Activated CD8-positive, alpha-beta T cell treated with anti-CD3 and anti-CD28 coated beads for 36 hours (primary cell): ENCODE measurements at regions of chr3 and their contacts with region 1.

Region 1: DNA sequence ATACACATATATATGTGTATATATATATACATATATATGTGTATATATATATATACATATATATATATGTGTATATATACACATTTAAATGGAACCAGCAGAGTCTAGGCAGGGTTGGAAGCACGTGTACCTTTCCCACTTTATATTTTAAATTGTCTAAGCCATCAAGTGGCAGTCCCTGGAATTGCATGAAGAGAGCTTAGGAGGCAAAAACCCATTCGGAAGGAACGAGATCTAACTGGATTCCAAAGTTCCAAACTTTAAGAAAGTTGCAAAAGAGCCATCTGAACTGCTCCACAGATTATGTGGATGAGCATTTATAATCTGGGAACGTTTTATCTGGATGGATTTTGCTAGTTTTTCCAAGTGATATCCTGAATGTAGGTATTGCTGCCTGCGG is 186.5 kb downstream of the FOXP1 start:
- DNase-seq: peak; percentile 49
- ATAC-seq: no peak
- H3K4me3 Mint-ChIP-seq: peak overlapping the region; percentile 73
- H3K27ac Mint-ChIP-seq: peak overlapping the region; percentile 91
- H3K4me1 Mint-ChIP-seq: peaks cover 80% of the 10 kb centered on the region
- H3K27me3 Mint-ChIP-seq: no peaks in the 10 kb centered on the region
- CTCF ChIP-seq: peak; percentile 43

Region 2: GRCh38 chr3:71087143-71088018 is 309.7 kb before region 1 on chr3:
- CTCF ChIA-PET with region 1: no interaction called
- POLR2A ChIA-PET with region 1: no interaction called
- intact Hi-C with region 1: loop called (anchors 10 kb)
- DNase-seq: peak; percentile 71
- ATAC-seq: peak; percentile 72
- H3K4me3 Mint-ChIP-seq: peak overlapping the region; percentile 57
- H3K27ac Mint-ChIP-seq: peak overlapping the region; percentile 93
- H3K4me1 Mint-ChIP-seq: peaks cover 90% of the 10 kb centered on the region
- H3K27me3 Mint-ChIP-seq: no peaks in the 10 kb centered on the region
- CTCF ChIP-seq: no peak

Region 3: GRCh38 chr3:71360764-71361163 is 36.3 kb before region 1 on chr3:
- CTCF ChIA-PET with region 1: interaction called, 12 read pairs
- POLR2A ChIA-PET with region 1: interaction called, 6 read pairs
- intact Hi-C with region 1: no loop called
- DNase-seq: no peak
- ATAC-seq: peak; percentile 67
- H3K4me3 Mint-ChIP-seq: peak overlapping the region; percentile 59
- H3K27ac Mint-ChIP-seq: peak overlapping the region; percentile 86
- H3K4me1 Mint-ChIP-seq: peaks cover 83% of the 10 kb centered on the region
- H3K27me3 Mint-ChIP-seq: no peaks in the 10 kb centered on the region
- CTCF ChIP-seq: no peak

Region 4: DNA sequence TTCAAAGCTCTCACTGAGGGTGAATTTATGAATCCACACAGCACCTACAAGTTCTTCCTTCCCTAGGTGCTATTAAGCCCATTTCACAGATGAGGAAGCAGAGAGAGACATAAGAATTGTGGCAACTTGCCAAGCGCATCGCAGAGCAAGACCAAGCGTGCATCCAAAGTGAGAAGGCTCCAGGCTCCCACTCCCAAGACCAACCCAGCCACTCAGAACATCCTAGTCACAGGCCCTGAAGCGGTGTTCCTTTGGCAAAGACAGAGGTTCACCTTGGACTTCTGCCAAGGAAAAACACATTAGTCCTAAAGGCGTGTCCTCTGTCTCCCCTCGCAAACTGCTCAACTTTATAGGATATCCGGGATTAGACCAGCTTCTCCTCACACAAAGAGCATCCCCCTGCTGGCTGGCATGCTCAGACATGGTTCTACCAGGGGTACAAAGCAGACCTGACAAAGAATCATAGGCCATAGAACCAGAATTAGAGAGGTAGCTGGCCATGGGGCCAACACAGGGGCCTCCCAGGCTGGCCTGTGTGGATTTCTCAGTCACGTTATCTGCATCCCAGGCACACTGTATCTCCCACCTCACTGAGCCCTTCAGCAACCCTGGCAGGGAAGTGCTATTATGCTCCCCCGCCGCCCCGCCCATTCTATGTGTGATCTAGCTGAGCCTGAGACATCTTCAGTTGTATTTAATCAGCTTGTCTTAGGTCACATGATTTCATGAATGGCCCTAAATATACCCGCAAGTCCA is 26.3 kb after region 1 on chr3:
- CTCF ChIA-PET with region 1: interaction called, 17 read pairs
- POLR2A ChIA-PET with region 1: interaction called, 4 read pairs
- intact Hi-C with region 1: no loop called
- DNase-seq: no peak
- ATAC-seq: no peak
- H3K4me3 Mint-ChIP-seq: no peak overlapping the region
- H3K27ac Mint-ChIP-seq: peak overlapping the region; percentile 90
- H3K4me1 Mint-ChIP-seq: peaks cover 93% of the 10 kb centered on the region
- H3K27me3 Mint-ChIP-seq: no peaks in the 10 kb centered on the region
- CTCF ChIP-seq: no peak

Region 5: GRCh38 chr3:71456156-71456555 is 59.1 kb after region 1 on chr3:
- CTCF ChIA-PET with region 1: interaction called, 11 read pairs
- POLR2A ChIA-PET with region 1: interaction called, 4 read pairs
- intact Hi-C with region 1: no loop called
- DNase-seq: peak; percentile 30
- ATAC-seq: no peak
- H3K4me3 Mint-ChIP-seq: peak overlapping the region; percentile 68
- H3K27ac Mint-ChIP-seq: peak overlapping the region; percentile 93
- H3K4me1 Mint-ChIP-seq: peaks cover 88% of the 10 kb centered on the region
- H3K27me3 Mint-ChIP-seq: no peaks in the 10 kb centered on the region
- CTCF ChIP-seq: peak; percentile 26

Region 6: GRCh38 chr3:71512000-71512399 is 115.0 kb after region 1 on chr3:
- CTCF ChIA-PET with region 1: interaction called, 14 read pairs
- POLR2A ChIA-PET with region 1: no interaction called
- intact Hi-C with region 1: no loop called
- DNase-seq: peak; percentile 52
- ATAC-seq: peak; percentile 95
- H3K4me3 Mint-ChIP-seq: no peak overlapping the region
- H3K27ac Mint-ChIP-seq: peak overlapping the region; percentile 55
- H3K4me1 Mint-ChIP-seq: peaks cover 24% of the 10 kb centered on the region
- H3K27me3 Mint-ChIP-seq: no peaks in the 10 kb centered on the region
- CTCF ChIP-seq: peak; percentile 61